ENCODE measurements at regions of chr1 and their contacts with region 1.

Region 1: DNA sequence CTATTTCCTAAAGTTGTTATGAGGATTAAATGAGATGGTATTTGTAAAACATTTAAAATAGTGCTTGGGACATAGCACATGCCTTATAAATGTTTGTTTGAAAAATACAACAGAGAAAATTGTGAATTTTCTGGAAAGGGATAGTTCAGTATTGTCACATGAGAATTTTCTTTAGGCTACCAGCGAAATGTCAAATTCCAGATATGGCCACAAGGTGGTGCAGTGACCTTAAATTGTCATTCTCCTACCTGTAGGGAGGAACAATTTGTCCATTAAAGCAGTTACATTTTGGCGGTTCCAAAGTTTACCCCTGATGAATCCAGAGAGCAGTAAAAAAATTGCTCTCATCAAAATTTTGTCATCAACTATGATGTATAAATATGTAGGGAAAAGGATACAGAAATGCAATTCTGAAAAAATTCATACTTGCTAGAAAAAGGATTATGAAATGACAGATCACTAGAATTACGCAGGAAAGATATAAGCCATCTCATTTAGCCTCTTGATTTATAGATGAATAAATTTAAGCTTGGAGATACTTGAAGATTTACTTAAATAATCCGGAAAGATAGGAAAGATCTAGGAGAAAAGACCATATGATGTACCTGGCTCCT is 50.2 kb upstream of the TSHB start:
- DNase-seq: peak; percentile 65
- H3K4me3 Mint-ChIP-seq: no peak overlapping the region
- H3K27ac Mint-ChIP-seq: no peak overlapping the region
- H3K4me1 Mint-ChIP-seq: no peaks in the 10 kb centered on the region
- H3K27me3 Mint-ChIP-seq: peaks cover 36% of the 10 kb centered on the region

Region 2: DNA sequence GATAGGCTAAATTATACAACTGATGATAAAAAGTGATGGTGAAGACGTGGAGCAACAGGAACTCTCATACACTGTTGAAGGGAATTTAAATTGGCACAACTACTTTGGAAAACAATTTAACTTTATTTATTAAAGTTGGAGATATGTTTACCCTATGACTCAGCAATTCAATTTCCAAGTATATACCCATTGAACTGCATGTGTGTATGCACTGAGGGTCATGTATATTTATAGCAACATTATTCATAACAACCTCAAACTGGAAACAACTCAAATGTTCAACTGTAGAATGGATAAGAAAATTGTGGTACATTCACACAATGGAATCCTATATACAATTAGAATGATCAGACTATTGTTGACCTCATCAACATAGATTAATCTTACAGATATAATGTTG is 381.4 kb before region 1 on chr1:
- CTCF ChIA-PET with region 1: no interaction called
- POLR2A ChIA-PET with region 1: no interaction called
- DNase-seq: no peak
- H3K4me3 Mint-ChIP-seq: no peak overlapping the region
- H3K27ac Mint-ChIP-seq: no peak overlapping the region
- H3K4me1 Mint-ChIP-seq: no peaks in the 10 kb centered on the region
- H3K27me3 Mint-ChIP-seq: no peaks in the 10 kb centered on the region

Region 3: DNA sequence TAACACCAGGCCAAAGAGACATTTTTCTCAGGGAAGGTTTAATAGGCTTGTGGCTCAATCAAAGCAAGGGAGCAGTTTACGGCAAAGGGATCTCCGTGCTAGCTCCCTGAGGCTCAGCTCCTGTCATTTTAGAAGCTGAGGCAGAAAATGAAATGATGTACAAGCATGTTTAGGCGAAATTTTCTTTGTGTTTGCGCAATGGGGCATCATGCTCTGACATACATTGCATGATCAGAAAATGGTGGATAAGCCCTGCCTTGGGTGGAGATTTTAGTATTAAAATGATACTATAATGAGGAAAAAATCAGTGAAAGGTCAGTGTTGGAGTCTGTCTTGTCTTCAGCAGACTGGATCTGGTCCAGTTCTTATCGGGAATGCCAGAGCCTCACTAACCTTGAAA is 30.4 kb before region 1 on chr1:
- CTCF ChIA-PET with region 1: no interaction called
- POLR2A ChIA-PET with region 1: no interaction called
- DNase-seq: no peak
- H3K4me3 Mint-ChIP-seq: no peak overlapping the region
- H3K27ac Mint-ChIP-seq: no peak overlapping the region
- H3K4me1 Mint-ChIP-seq: no peaks in the 10 kb centered on the region
- H3K27me3 Mint-ChIP-seq: peaks cover 6% of the 10 kb centered on the region

Region 4: GRCh38 chr1:115112496-115113375 is 133.4 kb after region 1 on chr1:
- CTCF ChIA-PET with region 1: interaction called, 33 read pairs
- POLR2A ChIA-PET with region 1: no interaction called
- DNase-seq: peak; percentile 57
- H3K4me3 Mint-ChIP-seq: no peak overlapping the region
- H3K27ac Mint-ChIP-seq: no peak overlapping the region
- H3K4me1 Mint-ChIP-seq: peaks cover 3% of the 10 kb centered on the region
- H3K27me3 Mint-ChIP-seq: peaks cover 2% of the 10 kb centered on the region

Region 5: GRCh38 chr1:115166531-115167091 is 187.2 kb after region 1 on chr1:
- CTCF ChIA-PET with region 1: no interaction called
- POLR2A ChIA-PET with region 1: no interaction called
- DNase-seq: no peak
- H3K4me3 Mint-ChIP-seq: no peak overlapping the region
- H3K27ac Mint-ChIP-seq: no peak overlapping the region
- H3K4me1 Mint-ChIP-seq: peaks cover 1% of the 10 kb centered on the region
- H3K27me3 Mint-ChIP-seq: peaks cover 21% of the 10 kb centered on the region